CD4-positive, alpha-beta T cell (primary cell): ENCODE measurements at regions of chr17 and their contacts with region 1.

Region 1: GRCh38 chr17:63697341-63698286 is 2.3 kb downstream of the LIMD2 start:
- DNase-seq: peak; percentile 77 to 92 (median 84)
- ATAC-seq: peak; percentile 33
- H3K4me3 ChIP-seq: peak overlapping the region; percentile 98
- H3K4me3 Mint-ChIP-seq: peak overlapping the region; percentile 100
- H3K27ac ChIP-seq: peak overlapping the region; percentile 73 to 91
- H3K27ac Mint-ChIP-seq: peak overlapping the region; percentile 100
- H3K4me1 ChIP-seq: peaks cover 78% of the 10 kb centered on the region
- H3K4me1 Mint-ChIP-seq: peaks cover 74% of the 10 kb centered on the region
- H3K27me3 ChIP-seq: no peaks in the 10 kb centered on the region
- H3K27me3 Mint-ChIP-seq: peaks cover 5% of the 10 kb centered on the region
- CTCF ChIP-seq: peak; percentile 82

Region 2: GRCh38 chr17:63647936-63648335 is 49.7 kb before region 1 on chr17:
- CTCF ChIA-PET with region 1: interaction called, 4 read pairs
- POLR2A ChIA-PET with region 1: interaction called, 3 read pairs
- intact Hi-C with region 1: loop called in 1 of 2 experiments (anchors 1 kb)
- DNase-seq: no peak
- ATAC-seq: no peak
- H3K4me3 ChIP-seq: no peak overlapping the region
- H3K4me3 Mint-ChIP-seq: no peak overlapping the region
- H3K27ac ChIP-seq: no peak overlapping the region
- H3K27ac Mint-ChIP-seq: no peak overlapping the region
- H3K4me1 ChIP-seq: peaks cover 11% of the 10 kb centered on the region
- H3K4me1 Mint-ChIP-seq: peaks cover 23% of the 10 kb centered on the region
- H3K27me3 ChIP-seq: no peaks in the 10 kb centered on the region
- H3K27me3 Mint-ChIP-seq: no peaks in the 10 kb centered on the region
- CTCF ChIP-seq: no peak

Region 3: DNA sequence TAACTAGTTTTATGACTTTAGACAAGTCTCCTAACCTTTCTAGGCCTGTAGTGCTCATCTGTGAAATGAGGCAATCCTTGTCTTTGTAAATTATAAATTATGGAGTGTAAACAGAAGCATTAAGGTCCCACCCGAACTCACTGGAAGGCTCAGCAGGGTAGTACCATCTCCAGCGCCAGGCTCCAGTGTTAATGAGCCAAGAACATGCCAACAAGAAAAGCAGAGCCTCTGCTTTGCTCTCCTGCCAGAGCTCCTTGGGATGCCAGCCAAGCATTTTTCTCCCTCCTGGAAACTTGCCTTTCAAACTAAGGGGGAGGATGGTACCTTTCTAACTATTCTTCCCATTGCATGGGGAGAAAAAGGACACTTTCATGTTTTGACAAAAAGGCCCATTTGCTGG is 12.6 kb before region 1 on chr17:
- CTCF ChIA-PET with region 1: interaction called, 3 read pairs
- POLR2A ChIA-PET with region 1: interaction called, 22 read pairs
- intact Hi-C with region 1: no loop called
- DNase-seq: no peak
- ATAC-seq: no peak
- H3K4me3 ChIP-seq: no peak overlapping the region
- H3K4me3 Mint-ChIP-seq: no peak overlapping the region
- H3K27ac ChIP-seq: no peak overlapping the region
- H3K27ac Mint-ChIP-seq: no peak overlapping the region
- H3K4me1 ChIP-seq: no peaks in the 10 kb centered on the region
- H3K4me1 Mint-ChIP-seq: no peaks in the 10 kb centered on the region
- H3K27me3 ChIP-seq: no peaks in the 10 kb centered on the region
- H3K27me3 Mint-ChIP-seq: no peaks in the 10 kb centered on the region
- CTCF ChIP-seq: no peak

Region 4: DNA sequence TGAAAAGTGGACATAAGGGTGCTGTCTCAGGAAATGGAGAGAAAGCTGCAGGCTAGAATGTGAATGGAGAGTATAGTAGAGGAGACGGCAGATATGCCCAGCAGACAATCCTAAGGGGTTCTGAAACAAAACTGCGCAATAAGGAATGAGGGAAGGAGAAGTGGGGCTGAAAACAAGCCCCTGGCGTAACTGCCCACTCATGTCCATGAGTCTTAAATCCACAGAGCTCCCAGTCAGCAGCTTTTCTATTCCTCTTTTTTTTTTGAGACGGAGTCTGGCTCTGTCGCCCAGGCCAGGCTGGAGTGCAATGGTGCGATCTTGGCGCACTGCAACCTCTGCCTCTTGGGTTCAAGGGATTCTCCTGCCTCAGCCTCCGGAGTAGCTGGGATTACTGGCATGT is 38.1 kb after region 1 on chr17:
- CTCF ChIA-PET with region 1: interaction called, 4 read pairs
- POLR2A ChIA-PET with region 1: interaction called, 212 read pairs
- intact Hi-C with region 1: no loop called
- DNase-seq: no peak
- ATAC-seq: no peak
- H3K4me3 ChIP-seq: no peak overlapping the region
- H3K4me3 Mint-ChIP-seq: no peak overlapping the region
- H3K27ac ChIP-seq: no peak overlapping the region
- H3K27ac Mint-ChIP-seq: no peak overlapping the region
- H3K4me1 ChIP-seq: peaks cover 10% of the 10 kb centered on the region
- H3K4me1 Mint-ChIP-seq: peaks cover 28% of the 10 kb centered on the region
- H3K27me3 ChIP-seq: no peaks in the 10 kb centered on the region
- H3K27me3 Mint-ChIP-seq: no peaks in the 10 kb centered on the region
- CTCF ChIP-seq: no peak

Region 5: DNA sequence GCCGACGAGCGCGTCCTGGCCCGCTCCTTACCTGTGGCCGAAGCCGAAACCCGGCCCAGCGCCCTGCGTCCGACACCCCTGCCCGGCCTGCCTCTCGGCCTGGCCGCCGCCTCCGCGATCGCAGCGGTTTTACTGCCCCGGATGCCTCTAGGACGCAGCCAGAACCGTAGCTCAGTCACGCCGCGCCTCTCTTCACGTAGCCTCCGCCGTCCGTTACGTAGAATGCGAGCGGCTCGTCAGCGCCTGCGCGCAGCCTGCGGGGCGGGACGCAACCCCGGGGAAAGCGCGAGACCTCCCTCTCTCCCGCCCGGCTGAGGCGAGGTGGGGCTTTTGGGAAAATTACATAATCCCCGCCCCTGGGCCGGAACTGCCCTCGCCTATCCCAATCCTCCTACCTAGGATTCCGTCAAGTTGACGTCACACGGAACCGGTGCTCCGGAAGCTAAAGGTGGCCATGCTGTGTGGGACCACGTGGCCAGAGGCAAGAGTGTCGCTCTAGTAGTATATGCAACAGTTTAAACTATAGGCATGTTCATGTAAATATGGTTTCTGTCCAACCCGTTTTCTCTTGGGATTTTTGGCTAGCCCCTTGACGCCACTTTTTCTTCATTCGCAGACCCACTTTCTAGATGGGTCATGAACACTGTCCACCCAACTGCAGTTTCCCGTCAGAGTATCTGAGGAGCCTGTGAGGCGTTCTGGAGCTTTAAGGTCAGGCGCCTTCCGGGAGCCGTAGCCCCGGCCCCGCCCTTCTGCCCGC is 75.9 kb after region 1 on chr17 and contains the start of gene CCDC47:
- CTCF ChIA-PET with region 1: interaction called, 11 read pairs
- POLR2A ChIA-PET with region 1: interaction called, 276 read pairs
- intact Hi-C with region 1: loop called (anchors 2 kb)
- DNase-seq: peak; percentile 94 to 100 (median 98)
- ATAC-seq: peak; percentile 80
- H3K4me3 ChIP-seq: peak within 1 kb of the TSS; percentile 67
- H3K4me3 Mint-ChIP-seq: peak within 1 kb of the TSS; percentile 99
- H3K27ac ChIP-seq: peak within 1 kb of the TSS; percentile 94 to 98
- H3K27ac Mint-ChIP-seq: peak within 1 kb of the TSS; percentile 97
- H3K4me1 ChIP-seq: peaks cover 58% of the 10 kb centered on the region
- H3K4me1 Mint-ChIP-seq: peaks cover 71% of the 10 kb centered on the region
- H3K27me3 ChIP-seq: no peaks in the 10 kb centered on the region
- H3K27me3 Mint-ChIP-seq: no peaks in the 10 kb centered on the region
- CTCF ChIP-seq: no peak
- total RNA-seq, gene CCDC47: 31.0 to 31.3 TPM

Region 6: GRCh38 chr17:63834431-63835166 is 137.0 kb after region 1 on chr17:
- CTCF ChIA-PET with region 1: no interaction called
- POLR2A ChIA-PET with region 1: interaction called, 16 read pairs
- intact Hi-C with region 1: loop called (anchors 1 to 5 kb)
- DNase-seq: peak in 13 of 14 experiments; percentile 40 to 88 (median 55)
- ATAC-seq: peak; percentile 88
- H3K4me3 ChIP-seq: no peak overlapping the region
- H3K4me3 Mint-ChIP-seq: peak overlapping the region; percentile 65
- H3K27ac ChIP-seq: no peak overlapping the region
- H3K27ac Mint-ChIP-seq: peak overlapping the region; percentile 45
- H3K4me1 ChIP-seq: peaks cover 75% of the 10 kb centered on the region
- H3K4me1 Mint-ChIP-seq: peaks cover 61% of the 10 kb centered on the region
- H3K27me3 ChIP-seq: no peaks in the 10 kb centered on the region
- H3K27me3 Mint-ChIP-seq: no peaks in the 10 kb centered on the region
- CTCF ChIP-seq: peak; percentile 57